Testis (tissue), 5 donors: ENCODE measurements at regions of chr6 and their contacts with region 1.

Region 1: GRCh38 chr6:35601331-35602132 is 87.2 kb downstream of the FKBP5 start:
- DNase-seq: peak; percentile 77
- H3K4me3 ChIP-seq: no peak overlapping the region
- H3K27ac ChIP-seq: peak overlapping the region; percentile 96 to 97
- H3K4me1 ChIP-seq: peaks cover 63% of the 10 kb centered on the region
- H3K27me3 ChIP-seq: no peaks in the 10 kb centered on the region
- CTCF ChIP-seq: no peak
- POLR2A ChIP-seq: no peak

Region 2: GRCh38 chr6:35258858-35259193 is 342.7 kb before region 1 on chr6:
- intact Hi-C with region 1: no loop called
- DNase-seq: peak; percentile 65
- H3K4me3 ChIP-seq: peak overlapping the region; percentile 76 to 94
- H3K27ac ChIP-seq: peak overlapping the region; percentile 92 to 96
- H3K4me1 ChIP-seq: peaks cover 20% of the 10 kb centered on the region
- H3K27me3 ChIP-seq: no peaks in the 10 kb centered on the region
- CTCF ChIP-seq: no peak
- POLR2A ChIP-seq: no peak

Region 3: GRCh38 chr6:35445696-35446095 is 155.8 kb before region 1 on chr6:
- intact Hi-C with region 1: no loop called
- DNase-seq: no peak
- H3K4me3 ChIP-seq: no peak overlapping the region
- H3K27ac ChIP-seq: no peak overlapping the region
- H3K4me1 ChIP-seq: no peaks in the 10 kb centered on the region
- H3K27me3 ChIP-seq: no peaks in the 10 kb centered on the region
- CTCF ChIP-seq: no peak
- POLR2A ChIP-seq: no peak

Region 4: GRCh38 chr6:35634316-35634715 is 32.8 kb after region 1 on chr6:
- intact Hi-C with region 1: no loop called
- DNase-seq: no peak
- H3K4me3 ChIP-seq: no peak overlapping the region
- H3K27ac ChIP-seq: peak overlapping the region; percentile 11 to 52
- H3K4me1 ChIP-seq: peaks cover 9% of the 10 kb centered on the region
- H3K27me3 ChIP-seq: no peaks in the 10 kb centered on the region
- CTCF ChIP-seq: no peak
- POLR2A ChIP-seq: no peak

Region 5: DNA sequence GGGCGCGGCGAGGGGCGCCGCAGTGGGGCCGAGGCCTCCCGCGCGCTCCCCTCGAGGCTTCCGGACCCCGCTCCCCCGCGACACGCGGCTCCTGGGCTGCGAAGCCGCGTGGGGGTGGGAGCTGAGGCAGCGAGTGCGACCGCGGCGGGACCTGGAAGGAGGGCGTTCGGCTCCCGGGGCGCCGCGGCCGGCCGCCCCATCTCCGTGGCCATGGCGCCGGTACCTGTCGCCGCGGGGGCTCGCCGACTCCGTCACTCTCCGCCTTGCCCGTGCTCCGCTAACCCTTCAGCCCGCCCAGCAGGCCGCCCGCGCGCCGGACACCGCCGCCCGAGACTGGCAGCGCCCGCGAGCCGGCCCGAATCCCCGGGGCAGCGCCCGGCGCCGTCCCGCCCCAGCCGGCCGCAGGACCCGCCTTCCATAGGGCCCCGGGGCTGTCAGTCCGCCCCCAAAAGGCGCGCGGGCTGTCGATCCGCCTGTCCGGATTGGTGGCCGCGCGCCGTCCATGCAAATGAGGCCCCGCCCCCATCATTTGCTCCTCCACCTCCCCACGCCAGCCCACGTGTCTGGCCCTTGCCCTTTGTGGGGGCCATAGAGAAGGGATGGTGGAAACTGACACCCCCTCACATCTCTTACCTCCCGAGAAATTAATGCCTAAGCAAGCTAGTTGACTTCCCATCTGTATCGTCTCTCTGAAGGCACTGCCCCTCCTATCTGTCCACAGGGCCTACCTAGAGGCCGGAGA is 87.2 kb after region 1 on chr6 and contains the start of gene FKBP5:
- intact Hi-C with region 1: loop called (anchors 5 kb)
- DNase-seq: peak; percentile 99
- H3K4me3 ChIP-seq: peak within 1 kb of the TSS; percentile 96 to 100
- H3K27ac ChIP-seq: peak within 1 kb of the TSS; percentile 99 to 100
- H3K4me1 ChIP-seq: peaks cover 21% of the 10 kb centered on the region
- H3K27me3 ChIP-seq: no peaks in the 10 kb centered on the region
- CTCF ChIP-seq: no peak
- POLR2A ChIP-seq: peak; percentile 91
- total RNA-seq, gene FKBP5: 156 to 185 TPM